Brain microvascular endothelial cell (primary cell): ENCODE measurements at regions of chr6 and their contacts with region 1.

Region 1: GRCh38 chr6:110528101-110528929 is 51.9 kb upstream of the SLC22A16 start:
- DNase-seq: peak; percentile 61
- H3K4me3 ChIP-seq: no peak overlapping the region
- H3K27ac ChIP-seq: peak overlapping the region; percentile 87
- H3K27me3 ChIP-seq: no peaks in the 10 kb centered on the region
- CTCF ChIP-seq: peak; percentile 71

Region 2: GRCh38 chr6:110958329-110959192 is 430.2 kb after region 1 on chr6 and contains the start of gene GTF3C6:
- in situ Hi-C with region 1: loop called (anchors 25 kb)
- DNase-seq: peak; percentile 91
- H3K4me3 ChIP-seq: peak within 1 kb of the TSS; percentile 94
- H3K27ac ChIP-seq: peak within 1 kb of the TSS; percentile 91
- H3K27me3 ChIP-seq: no peaks in the 10 kb centered on the region
- CTCF ChIP-seq: no peak